Left ventricle myocardium inferior (tissue), 1 donor: ENCODE measurements at regions of chr16 and their contacts with region 1.

Region 1: GRCh38 chr16:94918-95265 is 16.9 kb downstream of the MPG start:
- DNase-seq: no peak
- H3K4me3 ChIP-seq: no peak overlapping the region
- H3K27ac ChIP-seq: no peak overlapping the region
- H3K4me1 ChIP-seq: peaks cover 43% of the 10 kb centered on the region
- H3K27me3 ChIP-seq: no peaks in the 10 kb centered on the region
- CTCF ChIP-seq: no peak

Region 2: GRCh38 chr16:53346-54236 is 41.3 kb before region 1 on chr16 and contains the starts of genes POLR3K and SNRNP25:
- intact Hi-C with region 1: no loop called
- DNase-seq: peak; percentile 100
- H3K4me3 ChIP-seq: peak within 1 kb of the TSS; percentile 98
- H3K27ac ChIP-seq: peak within 1 kb of the TSS; percentile 91
- H3K4me1 ChIP-seq: peaks cover 34% of the 10 kb centered on the region
- H3K27me3 ChIP-seq: no peaks in the 10 kb centered on the region
- CTCF ChIP-seq: no peak
- total RNA-seq, gene POLR3K: 11.7 TPM
- total RNA-seq, gene SNRNP25: 71.2 TPM

Region 3: DNA sequence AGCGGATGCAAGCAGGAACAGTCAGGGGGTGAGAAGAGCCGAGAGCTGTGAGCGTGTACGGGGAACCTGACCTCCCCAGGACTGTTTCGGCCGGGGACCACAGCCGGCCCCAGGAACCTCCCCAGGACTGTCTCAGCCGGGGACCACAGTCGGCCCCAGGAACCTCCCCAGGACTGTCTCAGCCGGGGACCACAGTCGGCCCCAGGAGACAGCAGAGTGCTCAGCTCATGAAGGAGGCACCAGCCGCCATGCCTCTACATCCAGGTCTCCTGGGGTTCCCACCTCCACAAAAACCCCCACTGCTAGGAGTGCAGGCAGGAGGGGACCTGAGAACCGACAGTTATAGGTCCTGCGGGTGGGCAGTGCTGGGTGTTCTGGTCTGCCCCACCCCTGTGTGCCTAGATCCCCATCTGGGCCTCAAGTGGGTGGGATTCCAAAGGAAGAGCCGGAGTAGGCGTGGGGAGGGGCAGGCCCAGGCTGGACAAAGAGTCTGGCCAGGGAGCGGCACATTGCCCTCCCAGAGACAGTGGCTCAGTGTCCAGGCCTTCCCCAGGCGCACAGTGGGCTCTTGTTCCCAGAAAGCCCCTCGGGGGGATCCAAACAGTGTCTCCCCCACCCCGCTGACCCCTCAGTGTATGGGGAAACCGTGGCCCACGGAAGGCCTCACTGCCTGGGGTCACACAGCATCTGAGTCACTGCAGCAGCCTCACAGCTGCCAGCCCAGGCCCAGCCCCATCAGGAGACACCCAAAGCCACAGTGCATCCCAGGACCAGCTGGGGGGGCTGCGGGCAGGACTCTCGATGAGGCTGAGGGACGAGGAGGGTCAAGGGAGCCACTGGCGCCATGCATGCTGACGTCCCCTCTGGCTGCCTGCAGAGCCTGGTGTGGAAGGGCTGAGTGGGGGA is 26.8 kb before region 1 on chr16:
- intact Hi-C with region 1: loop called (anchors 2 kb)
- DNase-seq: peak; percentile 31
- H3K4me3 ChIP-seq: peak overlapping the region; percentile 6
- H3K27ac ChIP-seq: peak overlapping the region; percentile 56
- H3K4me1 ChIP-seq: peaks cover 82% of the 10 kb centered on the region
- H3K27me3 ChIP-seq: no peaks in the 10 kb centered on the region
- CTCF ChIP-seq: no peak

Region 4: DNA sequence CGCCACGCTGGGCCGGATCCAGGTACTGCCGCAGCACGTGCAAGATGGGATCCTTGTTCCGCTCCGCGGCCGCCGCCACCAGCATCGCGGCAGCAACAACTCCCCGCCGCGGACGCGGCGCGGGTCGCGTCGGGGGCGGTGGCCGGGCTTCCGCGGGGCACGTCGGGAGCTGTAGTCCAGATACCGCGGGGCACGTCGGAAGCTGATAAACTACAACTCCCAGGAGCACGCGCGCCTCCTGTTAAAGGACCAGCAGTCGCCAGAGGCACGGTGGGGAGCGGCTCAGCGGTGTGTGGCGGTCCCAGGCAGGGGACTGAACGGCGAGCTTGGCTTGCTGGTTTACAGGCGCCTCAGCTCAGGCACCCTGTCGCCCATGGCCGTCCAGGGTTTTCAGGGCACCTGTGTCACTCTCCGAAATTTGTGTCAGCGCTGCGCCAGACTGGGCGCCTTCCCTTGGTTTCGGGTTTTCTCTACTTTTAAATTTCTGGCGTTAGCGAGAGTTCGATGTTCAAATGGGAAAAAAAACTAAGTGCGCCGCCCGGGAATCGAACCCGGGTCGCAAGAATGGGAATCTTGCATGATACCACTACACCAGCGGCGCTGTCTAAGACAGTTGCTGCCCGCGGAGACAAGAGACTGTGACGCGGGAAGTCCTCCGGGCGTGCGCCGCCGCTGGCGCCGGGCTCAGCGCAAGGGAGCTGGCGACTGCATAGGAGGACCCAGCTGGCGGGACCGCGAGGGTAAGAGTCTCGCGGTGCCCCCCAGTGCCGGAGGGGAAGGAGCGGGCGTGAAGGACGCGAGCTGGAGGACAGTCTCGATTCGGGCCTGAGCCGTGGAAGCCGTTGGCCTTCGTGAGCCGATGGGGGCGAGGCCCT is 541.6 kb after region 1 on chr16 and contains the start of gene METTL26:
- intact Hi-C with region 1: no loop called
- DNase-seq: peak; percentile 97
- H3K4me3 ChIP-seq: peak within 1 kb of the TSS; percentile 91
- H3K27ac ChIP-seq: peak within 1 kb of the TSS; percentile 99
- H3K4me1 ChIP-seq: peaks cover 38% of the 10 kb centered on the region
- H3K27me3 ChIP-seq: no peaks in the 10 kb centered on the region
- CTCF ChIP-seq: no peak
- total RNA-seq, gene METTL26: 49.2 TPM